ENCODE measurements at regions of chr17 and their contacts with region 1.

Region 1: DNA sequence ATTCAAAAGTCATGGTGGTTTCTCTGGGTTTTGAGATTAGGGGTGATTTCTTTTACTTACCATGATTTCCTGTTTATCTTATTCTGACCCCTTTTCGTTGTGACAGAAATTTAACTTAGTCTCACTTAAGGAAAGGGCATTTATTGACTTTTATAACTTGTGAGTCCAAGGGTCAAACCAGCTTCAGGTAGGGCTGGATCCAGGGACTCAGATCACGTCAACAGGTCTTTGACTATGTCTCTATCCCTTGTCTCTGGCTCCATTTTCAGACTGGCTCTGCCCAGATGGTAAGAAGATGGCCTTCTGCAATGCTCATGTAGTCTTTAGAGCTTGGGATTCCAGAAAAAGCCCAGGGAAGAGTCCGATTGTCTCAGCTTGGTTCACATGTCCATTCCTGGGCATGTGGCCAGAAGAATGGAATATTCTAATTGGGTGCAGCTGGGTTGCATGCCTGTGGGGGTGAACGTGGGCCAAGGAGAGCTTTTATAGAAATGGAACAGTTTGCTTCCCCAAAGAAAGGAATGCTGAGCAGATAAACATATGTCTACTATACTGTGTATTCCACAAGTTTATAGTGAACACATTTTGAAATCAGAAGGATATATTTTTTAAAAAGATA is 13.4 kb downstream of the USP43 start:
- DNase-seq: no peak
- ATAC-seq: no peak
- H3K4me3 Mint-ChIP-seq: no peak overlapping the region
- H3K27ac Mint-ChIP-seq: no peak overlapping the region
- H3K4me1 Mint-ChIP-seq: no peaks in the 10 kb centered on the region
- H3K27me3 Mint-ChIP-seq: peaks cover 8% of the 10 kb centered on the region

Region 2: DNA sequence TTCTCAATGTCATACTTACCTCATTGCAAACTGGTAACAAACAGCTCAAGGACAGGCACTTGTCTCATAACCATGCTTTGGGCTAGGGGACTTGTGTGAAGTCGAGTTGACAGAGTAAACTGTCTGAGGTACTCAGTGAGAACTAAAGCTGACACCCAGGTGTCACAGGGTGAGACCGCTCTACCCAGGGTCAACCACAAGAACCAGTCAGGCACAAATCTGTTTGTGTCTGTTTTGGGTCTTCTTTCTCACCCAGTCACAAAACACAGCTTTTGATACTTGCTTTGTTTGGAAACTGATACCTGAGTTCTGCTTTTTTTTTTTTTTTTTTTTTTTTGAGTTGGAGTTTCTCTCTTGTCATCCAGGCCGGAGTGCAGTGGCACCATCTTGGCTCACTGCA is 244.2 kb before region 1 on chr17:
- CTCF ChIA-PET with region 1: no interaction called
- POLR2A ChIA-PET with region 1: no interaction called
- intact Hi-C with region 1: no loop called
- DNase-seq: no peak
- ATAC-seq: no peak
- H3K4me3 Mint-ChIP-seq: no peak overlapping the region
- H3K27ac Mint-ChIP-seq: no peak overlapping the region
- H3K4me1 Mint-ChIP-seq: peaks cover 4% of the 10 kb centered on the region
- H3K27me3 Mint-ChIP-seq: no peaks in the 10 kb centered on the region

Region 3: GRCh38 chr17:9557161-9557755 is 101.4 kb before region 1 on chr17:
- CTCF ChIA-PET with region 1: no interaction called
- POLR2A ChIA-PET with region 1: no interaction called
- intact Hi-C with region 1: no loop called
- DNase-seq: no peak
- ATAC-seq: no peak
- H3K4me3 Mint-ChIP-seq: no peak overlapping the region
- H3K27ac Mint-ChIP-seq: no peak overlapping the region
- H3K4me1 Mint-ChIP-seq: no peaks in the 10 kb centered on the region
- H3K27me3 Mint-ChIP-seq: no peaks in the 10 kb centered on the region

Region 4: DNA sequence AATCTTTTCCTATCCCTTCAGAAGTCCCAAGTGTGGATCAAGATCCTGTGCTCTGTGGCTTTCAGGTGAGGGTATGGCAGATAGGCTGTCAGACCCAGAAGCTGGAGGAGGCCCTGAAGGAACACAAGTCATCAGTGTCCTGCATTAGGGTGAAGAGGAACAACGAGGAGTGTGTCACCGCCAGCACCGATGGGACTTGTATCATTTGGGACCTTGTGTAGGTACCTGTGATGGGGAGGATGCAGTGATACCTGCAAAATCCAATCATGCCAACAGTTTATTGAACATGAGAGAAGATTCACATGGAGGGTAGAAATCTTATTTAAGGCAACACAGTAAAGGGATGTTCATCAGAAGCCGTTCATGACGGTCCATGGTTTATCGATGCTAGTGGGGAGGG is 23.4 kb before region 1 on chr17:
- CTCF ChIA-PET with region 1: interaction called, 6 read pairs
- POLR2A ChIA-PET with region 1: no interaction called
- intact Hi-C with region 1: loop called in 1 of 2 experiments (anchors 1 kb)
- DNase-seq: no peak
- ATAC-seq: no peak
- H3K4me3 Mint-ChIP-seq: no peak overlapping the region
- H3K27ac Mint-ChIP-seq: no peak overlapping the region
- H3K4me1 Mint-ChIP-seq: no peaks in the 10 kb centered on the region
- H3K27me3 Mint-ChIP-seq: peaks cover 27% of the 10 kb centered on the region

Region 5: DNA sequence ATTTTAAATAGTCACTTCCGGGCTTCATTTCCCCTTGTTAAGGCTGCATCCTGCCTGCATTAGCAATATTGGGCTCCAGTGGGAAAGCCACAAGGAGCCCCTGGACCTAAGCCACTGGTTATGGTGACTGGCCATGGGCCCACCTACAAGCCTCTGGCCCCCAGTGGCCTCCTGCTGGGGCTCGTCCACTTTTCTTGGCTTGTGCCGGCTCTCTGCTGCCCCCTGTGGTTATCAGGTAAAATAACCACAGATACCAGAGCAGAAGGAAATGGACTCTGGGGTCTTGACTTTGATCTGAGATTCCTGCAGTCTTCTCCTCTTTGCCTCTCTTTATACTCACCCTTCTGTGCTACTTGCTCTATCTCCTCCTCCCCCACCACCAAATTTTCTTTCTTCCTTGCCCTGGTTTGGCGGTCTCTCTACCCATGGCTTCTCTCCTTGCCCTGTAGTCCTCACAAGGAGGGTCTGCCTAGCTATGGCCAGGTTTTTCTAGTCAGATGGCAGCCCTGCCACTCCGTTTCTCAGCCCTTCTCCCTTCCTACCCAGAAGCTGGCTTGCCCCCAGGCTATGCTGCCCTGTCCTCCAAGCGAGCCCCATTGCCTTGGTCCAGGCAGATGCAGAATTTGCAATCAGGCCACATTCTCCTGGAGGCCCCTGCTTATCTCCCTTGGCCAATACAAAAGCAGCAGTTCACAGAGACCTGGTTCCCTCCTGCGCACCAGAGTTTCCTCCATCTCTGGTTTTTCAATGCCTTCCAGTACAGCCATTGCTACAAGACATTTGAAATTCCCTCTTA is 329.3 kb after region 1 on chr17:
- CTCF ChIA-PET with region 1: no interaction called
- POLR2A ChIA-PET with region 1: no interaction called
- intact Hi-C with region 1: no loop called
- DNase-seq: peak; percentile 41
- ATAC-seq: no peak
- H3K4me3 Mint-ChIP-seq: no peak overlapping the region
- H3K27ac Mint-ChIP-seq: no peak overlapping the region
- H3K4me1 Mint-ChIP-seq: no peaks in the 10 kb centered on the region
- H3K27me3 Mint-ChIP-seq: no peaks in the 10 kb centered on the region